Sciatic nerve (tissue), 2 donors: ENCODE measurements at regions of chr19 and their contacts with region 1.

Region 1: DNA sequence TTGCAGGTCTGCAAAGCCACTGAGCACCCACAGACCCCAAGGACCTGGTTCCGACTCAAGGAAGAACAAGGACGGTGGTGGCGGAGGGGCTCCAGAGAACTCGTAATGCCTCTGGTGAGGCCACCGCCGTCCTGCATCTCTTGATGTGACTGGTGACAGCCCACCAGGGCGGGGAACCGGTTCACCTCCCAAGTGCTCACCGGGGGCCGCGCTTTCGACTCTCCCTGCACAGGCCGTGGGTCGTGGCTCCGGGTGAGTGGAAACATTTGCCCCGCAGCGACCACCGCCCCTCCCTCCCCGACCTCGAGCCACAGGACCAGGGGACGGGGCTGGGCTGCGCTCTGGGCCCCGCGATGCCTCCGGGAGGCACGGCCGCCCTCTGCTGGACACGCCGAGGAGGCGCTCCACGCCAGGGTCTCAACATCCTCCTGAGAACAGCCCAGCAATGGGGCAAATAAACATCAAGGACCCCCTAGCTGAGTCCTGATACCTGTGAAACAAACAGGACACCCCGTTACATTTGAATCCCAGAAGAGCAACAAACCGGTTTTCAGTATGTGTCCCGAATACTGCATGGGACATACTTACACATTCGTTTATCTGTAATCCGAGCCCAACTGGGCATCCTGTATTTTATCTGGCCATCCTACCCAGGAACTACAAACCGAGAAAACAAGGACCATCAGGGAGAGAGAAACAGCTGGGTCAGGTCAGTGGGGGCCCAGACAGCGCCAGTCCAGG is 3.9 kb upstream of the PLPP2 start:
- DNase-seq: no peak
- ATAC-seq: peak; percentile 71

Region 2: GRCh38 chr19:364496-365287 is 69.6 kb after region 1 on chr19:
- intact Hi-C with region 1: loop called (anchors 5 kb)
- DNase-seq: peak; percentile 30
- ATAC-seq: no peak

Region 3: DNA sequence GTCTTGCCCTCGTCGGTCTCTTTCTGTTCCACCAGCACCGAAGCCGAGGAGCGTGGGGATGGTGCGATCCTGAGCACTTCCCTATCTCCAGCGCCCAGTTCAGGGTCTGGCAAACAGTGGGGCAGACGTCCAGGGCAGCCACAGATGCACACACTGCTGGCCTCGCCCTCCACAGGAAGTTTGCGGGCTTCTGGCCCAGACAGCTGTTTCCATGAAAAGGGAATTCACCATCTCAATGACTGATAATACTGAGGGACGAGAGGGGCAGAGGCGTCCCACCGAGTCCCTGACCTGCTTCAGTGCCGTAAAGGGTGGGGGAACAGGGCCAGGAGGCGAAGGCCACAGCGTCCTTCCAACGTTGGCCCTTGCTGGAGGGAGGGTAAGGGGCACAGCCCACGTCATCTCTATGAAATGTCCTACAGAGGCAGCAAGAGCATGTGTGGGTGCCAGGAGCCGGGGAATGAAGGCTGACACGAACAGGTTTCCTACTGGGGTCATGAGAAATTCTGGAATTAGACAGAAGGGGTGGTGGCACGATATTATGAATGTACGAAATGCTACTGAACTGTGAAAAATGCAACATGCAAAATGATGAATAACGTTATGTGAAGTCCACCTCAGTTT is 146.2 kb after region 1 on chr19:
- intact Hi-C with region 1: no loop called
- DNase-seq: no peak
- ATAC-seq: no peak